H1 (cell line): ENCODE measurements at regions of chr3 and their contacts with region 1.

Region 1: DNA sequence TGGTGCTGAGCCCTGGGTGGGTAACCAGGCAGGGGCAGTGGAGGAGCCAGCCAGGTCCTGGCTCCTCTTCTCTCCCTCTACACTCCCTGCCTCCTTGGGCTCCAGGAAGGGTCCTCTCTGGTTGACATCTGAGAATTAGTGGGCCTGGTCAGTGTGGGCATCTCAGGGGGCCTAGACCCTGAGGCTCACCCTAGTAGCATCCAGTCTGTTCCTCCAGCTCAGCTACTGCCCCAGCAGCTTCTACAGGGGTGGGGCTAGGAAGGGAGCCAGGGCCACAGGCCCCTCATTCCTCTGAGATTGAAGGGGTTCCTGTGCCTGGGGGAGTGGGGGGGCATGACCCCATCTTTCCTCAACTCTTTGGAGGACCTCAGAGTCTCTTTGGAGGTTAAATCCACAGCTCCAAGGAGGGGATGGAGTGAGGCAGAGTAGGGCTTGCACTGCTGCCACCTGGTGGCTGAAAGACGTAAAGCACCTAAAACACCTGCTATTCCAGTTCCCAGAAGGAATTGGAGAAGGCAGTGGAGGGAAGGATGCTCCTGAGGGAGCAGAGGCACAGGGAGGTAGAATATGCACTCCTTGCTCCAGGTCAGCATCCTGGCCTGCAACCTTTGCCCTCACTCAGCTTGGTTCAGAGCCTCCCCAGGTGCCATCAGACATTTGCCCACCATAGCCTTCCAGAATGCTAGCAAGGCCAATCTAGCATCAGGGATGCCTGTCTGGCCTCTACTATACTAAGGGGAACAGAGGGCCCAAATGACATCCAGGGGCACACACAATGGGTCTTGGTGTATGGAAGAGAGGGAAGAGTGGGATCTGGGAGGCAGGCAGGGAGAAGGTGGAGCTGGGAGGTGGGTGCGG is 25.1 kb downstream of the C3orf18 start:
- DNase-seq: peak; percentile 50 to 94
- H3K4me3 ChIP-seq: no peak overlapping the region
- H3K27ac ChIP-seq: no peak overlapping the region
- H3K4me1 ChIP-seq: peaks cover 6 to 12% (median 10%) of the 10 kb centered on the region in 4 experiments
- H3K27me3 ChIP-seq: no peaks in the 10 kb centered on the region; a peak in 1 of 7 replicates
- CTCF ChIP-seq: peak in 2 of 3 experiments; percentile 94 to 97; a peak in 3 of 4 replicates
- EP300 ChIP-seq: no peak
- POLR2A ChIP-seq: no peak
- RAD21 ChIP-seq: peak; percentile 94 to 96

Region 2: GRCh38 chr3:50358911-50359759 is 183.3 kb before region 1 on chr3 and contains the start of gene TMEM115:
- CTCF ChIA-PET with region 1: interaction called, 10 read pairs
- POLR2A ChIA-PET with region 1: no interaction called
- DNase-seq: peak; percentile 91 to 98
- H3K4me3 ChIP-seq: peak within 1 kb of the TSS; percentile 75 to 85 (median 83)
- H3K27ac ChIP-seq: peak within 1 kb of the TSS; percentile 46; the same call in 1 of the 2 replicates
- H3K4me1 ChIP-seq: peaks cover 0 to 16% (median 9%) of the 10 kb centered on the region in 4 experiments; a peak in 6 of 7 replicates
- H3K27me3 ChIP-seq: peaks cover 0 to 5% (median under 1%) of the 10 kb centered on the region in 4 experiments; a peak in 3 of 7 replicates
- CTCF ChIP-seq: no peak
- EP300 ChIP-seq: no peak
- POLR2A ChIP-seq: no peak
- RAD21 ChIP-seq: no peak
- total RNA-seq, gene TMEM115: 25.3 and 25.4 TPM in 2 replicates

Region 3: DNA sequence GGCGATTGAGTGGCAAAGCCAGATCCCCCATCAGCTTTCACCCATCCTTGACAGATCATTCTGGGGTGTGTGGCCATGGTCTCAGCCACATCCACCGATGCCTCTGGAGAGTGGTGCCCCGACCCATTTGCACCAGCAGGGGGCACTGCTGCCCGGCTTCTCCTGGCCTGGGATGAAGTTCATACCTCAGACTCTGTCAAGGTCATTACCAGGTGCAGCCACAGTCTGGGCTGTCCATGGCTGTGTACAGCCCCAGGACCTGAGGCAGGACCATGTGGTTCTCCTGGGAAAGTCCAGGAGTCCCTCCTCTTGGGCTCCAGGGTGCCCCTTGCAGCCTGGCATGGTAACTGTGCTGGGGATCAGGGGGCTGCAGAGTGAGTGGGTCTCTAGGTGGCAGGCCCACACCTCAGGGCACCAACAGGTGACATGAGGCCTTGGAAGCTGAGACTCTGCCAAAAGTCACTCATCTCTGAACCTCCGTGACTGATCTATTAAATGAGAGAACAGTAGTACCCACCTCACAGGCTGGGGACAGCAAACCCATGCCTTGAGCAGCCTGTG is 106.2 kb before region 1 on chr3:
- CTCF ChIA-PET with region 1: interaction called, 473 read pairs
- POLR2A ChIA-PET with region 1: interaction called, 4 read pairs
- DNase-seq: peak; percentile 50 to 95
- H3K4me3 ChIP-seq: no peak overlapping the region
- H3K27ac ChIP-seq: no peak overlapping the region
- H3K4me1 ChIP-seq: peaks cover 0 to 4% (median 1%) of the 10 kb centered on the region in 4 experiments; a peak in 3 of 7 replicates
- H3K27me3 ChIP-seq: no peaks in the 10 kb centered on the region
- CTCF ChIP-seq: peak in 2 of 3 experiments; percentile 92 to 95; a peak in 3 of 4 replicates
- EP300 ChIP-seq: no peak
- POLR2A ChIP-seq: no peak
- RAD21 ChIP-seq: peak; percentile 93 to 94

Region 4: GRCh38 chr3:50474717-50475116 is 67.7 kb before region 1 on chr3:
- CTCF ChIA-PET with region 1: interaction called, 10 read pairs
- POLR2A ChIA-PET with region 1: no interaction called
- DNase-seq: no peak
- H3K4me3 ChIP-seq: no peak overlapping the region
- H3K27ac ChIP-seq: no peak overlapping the region
- H3K4me1 ChIP-seq: peaks cover 0 to 8% (median under 1%) of the 10 kb centered on the region in 4 experiments; a peak in 5 of 7 replicates
- H3K27me3 ChIP-seq: no peaks in the 10 kb centered on the region; a peak in 1 of 7 replicates
- CTCF ChIP-seq: no peak
- EP300 ChIP-seq: no peak
- POLR2A ChIP-seq: no peak
- RAD21 ChIP-seq: no peak

Region 5: GRCh38 chr3:50509715-50510114 is 32.7 kb before region 1 on chr3:
- CTCF ChIA-PET with region 1: interaction called, 114 read pairs
- POLR2A ChIA-PET with region 1: no interaction called
- DNase-seq: no peak
- H3K4me3 ChIP-seq: no peak overlapping the region
- H3K27ac ChIP-seq: no peak overlapping the region
- H3K4me1 ChIP-seq: peaks cover 0 to 6% (median 0%) of the 10 kb centered on the region in 4 experiments; a peak in 3 of 7 replicates
- H3K27me3 ChIP-seq: peaks cover 0 to 11% (median 4%) of the 10 kb centered on the region in 4 experiments; a peak in 6 of 7 replicates
- CTCF ChIP-seq: peak in 2 of 3 experiments; percentile 23 to 27; a peak in 3 of 4 replicates
- EP300 ChIP-seq: no peak
- POLR2A ChIP-seq: no peak
- RAD21 ChIP-seq: peak in 1 of 2 experiments; percentile 35; a peak in 2 of 4 replicates

Region 6: GRCh38 chr3:50562861-50563260 is 20.5 kb after region 1 on chr3:
- CTCF ChIA-PET with region 1: interaction called, 15 read pairs
- POLR2A ChIA-PET with region 1: interaction called, 3 read pairs
- DNase-seq: no peak
- H3K4me3 ChIP-seq: no peak overlapping the region
- H3K27ac ChIP-seq: no peak overlapping the region
- H3K4me1 ChIP-seq: peaks cover 0 to 6% (median 3%) of the 10 kb centered on the region in 4 experiments; a peak in 5 of 7 replicates
- H3K27me3 ChIP-seq: peaks cover 0 to 13% (median 5%) of the 10 kb centered on the region in 4 experiments; a peak in 4 of 7 replicates
- CTCF ChIP-seq: no peak
- EP300 ChIP-seq: no peak
- POLR2A ChIP-seq: no peak
- RAD21 ChIP-seq: no peak

Region 7: GRCh38 chr3:50936389-50936788 is 394.0 kb after region 1 on chr3:
- CTCF ChIA-PET with region 1: no interaction called
- POLR2A ChIA-PET with region 1: no interaction called
- DNase-seq: no peak
- H3K4me3 ChIP-seq: no peak overlapping the region
- H3K27ac ChIP-seq: no peak overlapping the region
- H3K4me1 ChIP-seq: no peaks in the 10 kb centered on the region
- H3K27me3 ChIP-seq: no peaks in the 10 kb centered on the region
- CTCF ChIP-seq: no peak
- EP300 ChIP-seq: no peak
- POLR2A ChIP-seq: no peak
- RAD21 ChIP-seq: no peak